Dendritic cell treated with granulocyte-macrophage colony-stimulating factor and Interleukin-4, amounts not matched to agents 40 ng/mL and 50 ng/mL, for 4 days (primary cell): ENCODE measurements at regions of chr2 and their contacts with region 1.

Region 1: DNA sequence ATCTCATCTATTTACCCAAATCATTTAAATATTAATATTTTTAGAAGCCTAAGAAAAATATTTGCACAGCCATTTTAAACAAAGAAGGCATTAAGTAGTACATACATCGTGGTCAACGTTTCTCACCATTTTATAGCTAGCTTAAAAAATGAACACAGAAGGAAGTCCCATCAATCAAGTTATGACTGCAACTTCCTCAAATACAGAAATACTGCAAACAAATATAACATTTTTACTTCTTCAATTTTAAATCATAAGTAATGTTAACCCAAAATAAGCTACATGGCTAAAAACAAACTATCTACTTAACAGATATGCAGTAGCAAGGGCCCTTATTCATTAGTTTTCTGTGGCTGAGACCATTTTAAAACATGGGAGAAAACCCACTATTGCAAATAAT is 30.6 kb downstream of the ITSN2 start:
- H3K4me3 Mint-ChIP-seq: peak overlapping the region; percentile 40
- H3K27ac Mint-ChIP-seq: peak overlapping the region; percentile 90
- H3K4me1 Mint-ChIP-seq: peaks cover 51% of the 10 kb centered on the region
- H3K27me3 Mint-ChIP-seq: no peaks in the 10 kb centered on the region

Region 2: DNA sequence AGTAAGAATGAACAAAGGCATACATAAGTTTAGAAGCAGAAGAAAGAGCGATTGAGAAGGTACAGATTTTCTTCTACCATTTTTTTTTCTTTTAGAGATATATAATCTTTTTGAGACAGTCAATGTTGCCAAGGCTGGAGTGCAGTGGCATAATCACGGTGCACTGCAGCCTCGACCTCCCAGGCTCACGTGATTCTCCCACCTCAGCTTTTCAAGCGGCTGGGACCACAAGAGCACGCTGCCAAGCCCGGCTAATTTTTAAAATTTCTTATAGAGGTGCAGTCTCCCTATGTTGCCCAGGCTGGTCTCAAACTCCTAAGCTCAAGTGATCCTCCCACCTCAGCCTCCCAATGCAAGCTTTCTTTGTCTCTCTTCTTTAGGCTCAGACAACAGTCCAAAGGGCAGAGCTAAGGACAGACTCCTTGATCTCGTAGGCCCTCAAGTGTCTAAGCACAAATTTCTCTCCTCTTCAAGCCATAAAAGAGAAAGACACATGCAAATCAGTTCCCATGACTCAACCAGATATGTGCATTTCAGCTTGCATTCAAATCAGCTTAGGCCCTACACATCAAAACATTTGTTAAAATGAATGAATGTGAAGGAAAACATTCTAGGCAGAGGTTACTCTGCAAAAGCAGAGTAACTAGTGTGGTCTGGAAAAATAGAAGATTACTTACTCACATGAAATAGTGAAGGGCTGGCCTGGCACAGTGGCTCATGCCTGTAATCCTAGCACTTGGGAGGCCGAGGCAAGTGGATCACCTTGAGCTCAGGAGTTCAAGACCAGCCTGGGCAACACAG is 12.6 kb after region 1 on chr2:
- intact Hi-C with region 1: loop called (anchors 2 kb)
- H3K4me3 Mint-ChIP-seq: peak overlapping the region; percentile 17
- H3K27ac Mint-ChIP-seq: peak overlapping the region; percentile 45
- H3K4me1 Mint-ChIP-seq: peaks cover 62% of the 10 kb centered on the region
- H3K27me3 Mint-ChIP-seq: no peaks in the 10 kb centered on the region

Region 3: GRCh38 chr2:24360050-24360962 is 30.6 kb after region 1 on chr2 and contains the start of gene ITSN2:
- intact Hi-C with region 1: loop called (anchors 5 kb)
- H3K4me3 Mint-ChIP-seq: peak within 1 kb of the TSS; percentile 82
- H3K27ac Mint-ChIP-seq: peak within 1 kb of the TSS; percentile 95
- H3K4me1 Mint-ChIP-seq: peaks cover 63% of the 10 kb centered on the region
- H3K27me3 Mint-ChIP-seq: no peaks in the 10 kb centered on the region